SK-N-SH (cell line): ENCODE measurements at regions of chr4 and their contacts with region 1.

Region 1: DNA sequence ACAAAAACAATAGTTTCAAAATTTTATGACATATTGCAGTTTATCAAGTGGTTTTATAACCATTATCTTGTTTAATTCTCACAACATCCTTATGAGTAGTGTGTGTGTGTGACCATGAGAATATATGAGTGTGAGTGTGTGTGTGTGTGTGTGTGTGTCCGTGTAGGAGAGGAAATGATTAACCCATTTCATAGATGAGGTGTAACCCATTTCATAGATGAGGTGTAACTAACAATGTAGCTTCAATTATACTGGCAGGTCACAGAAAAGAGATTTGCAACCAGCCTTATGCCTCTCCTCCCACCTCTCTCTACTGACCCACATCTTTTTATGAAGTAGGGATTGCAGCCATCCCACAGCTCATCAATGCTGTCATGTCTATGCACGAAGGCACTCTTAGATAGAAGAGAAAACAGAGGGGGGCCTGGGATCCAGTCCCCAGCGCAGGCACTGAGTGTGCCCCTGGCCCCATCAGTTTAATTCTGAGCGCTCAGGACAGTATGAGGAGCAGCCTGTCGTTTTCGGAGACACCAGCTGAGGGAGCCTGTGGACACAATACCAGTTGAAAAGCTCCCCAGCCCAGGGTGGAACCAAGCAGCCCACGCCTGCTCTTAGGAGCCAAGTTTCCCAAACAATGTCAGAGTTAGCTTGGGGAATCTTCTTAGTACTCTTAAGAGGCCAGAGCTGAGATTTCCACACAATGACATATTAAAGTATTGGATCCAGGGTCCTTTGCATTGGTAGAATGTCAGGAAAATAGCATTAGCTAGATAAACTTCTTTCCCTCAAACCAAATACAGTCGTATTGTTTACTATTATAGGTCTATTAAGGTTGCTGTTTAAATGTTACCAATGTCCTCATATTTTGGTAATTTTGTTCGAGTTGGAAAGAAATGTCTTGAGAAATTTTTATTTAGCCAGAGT is 88.6 kb downstream of the PALLD start:
- DNase-seq: peak; percentile 60
- H3K4me3 ChIP-seq: no peak overlapping the region
- H3K27ac ChIP-seq: peak overlapping the region in 1 of 2 experiments; percentile 77; a peak in 3 of 4 replicates
- H3K4me1 ChIP-seq: peaks cover 5 to 47% of the 10 kb centered on the region in 2 experiments
- H3K27me3 ChIP-seq: no peaks in the 10 kb centered on the region
- CTCF ChIP-seq: peak; percentile 83
- EP300 ChIP-seq: no peak
- RAD21 ChIP-seq: peak; percentile 90

Region 2: DNA sequence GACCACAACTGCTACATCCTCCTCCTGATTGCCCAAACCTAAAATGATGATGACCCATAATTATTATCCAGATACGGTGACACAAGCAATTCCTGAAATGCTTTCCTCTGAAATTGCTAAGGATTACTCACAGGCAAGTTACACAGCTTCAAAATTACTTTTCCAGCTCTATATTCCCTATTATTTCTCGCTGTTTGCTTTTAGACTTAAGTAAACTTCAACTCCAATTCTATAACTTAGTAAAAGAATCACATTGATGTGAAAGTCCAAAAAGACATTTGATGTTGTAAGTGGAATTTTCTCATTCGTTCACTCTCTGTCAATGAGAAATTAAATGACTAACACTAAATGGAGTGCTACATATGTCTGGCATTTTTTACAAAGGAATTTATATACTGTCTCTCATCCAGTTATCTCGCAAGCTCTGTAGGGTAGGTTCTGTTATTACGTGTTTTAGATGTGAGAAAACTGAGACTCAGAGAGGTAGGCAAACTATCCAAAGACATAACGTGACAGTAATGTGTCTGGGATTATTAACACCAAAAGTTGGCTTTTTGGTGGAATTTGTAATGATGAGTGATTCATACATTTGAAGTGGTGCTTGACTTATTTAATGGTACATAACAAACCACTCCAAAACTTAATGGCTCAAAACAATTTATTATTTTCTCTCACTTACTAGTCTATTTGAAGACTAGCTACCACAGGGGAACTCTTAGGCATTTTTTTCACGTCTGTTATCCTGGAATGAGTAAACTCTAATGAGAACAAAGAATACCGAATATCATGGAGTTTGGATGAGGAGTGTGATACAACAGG is 57.1 kb before region 1 on chr4:
- CTCF ChIA-PET with region 1: no interaction called
- POLR2A ChIA-PET with region 1: no interaction called
- DNase-seq: no peak
- H3K4me3 ChIP-seq: no peak overlapping the region
- H3K27ac ChIP-seq: peak overlapping the region in 1 of 2 experiments; percentile 65; a peak in 2 of 4 replicates
- H3K4me1 ChIP-seq: peaks cover 0 to 20% of the 10 kb centered on the region in 2 experiments; a peak in 2 of 4 replicates
- H3K27me3 ChIP-seq: no peaks in the 10 kb centered on the region
- CTCF ChIP-seq: no peak
- EP300 ChIP-seq: no peak
- RAD21 ChIP-seq: no peak

Region 3: GRCh38 chr4:168560184-168560827 is 25.1 kb before region 1 on chr4:
- CTCF ChIA-PET with region 1: interaction called, 14 read pairs
- POLR2A ChIA-PET with region 1: no interaction called
- DNase-seq: no peak
- H3K4me3 ChIP-seq: no peak overlapping the region
- H3K27ac ChIP-seq: peak overlapping the region; percentile 66 to 86
- H3K4me1 ChIP-seq: peaks cover 8 to 61% of the 10 kb centered on the region in 2 experiments; a peak in 3 of 4 replicates
- H3K27me3 ChIP-seq: no peaks in the 10 kb centered on the region
- CTCF ChIP-seq: no peak
- EP300 ChIP-seq: peak in 1 of 2 experiments; percentile 40; a peak in 1 of 4 replicates
- RAD21 ChIP-seq: no peak

Region 4: GRCh38 chr4:168598191-168598590 is 12.8 kb after region 1 on chr4:
- CTCF ChIA-PET with region 1: interaction called, 11 read pairs
- POLR2A ChIA-PET with region 1: no interaction called
- DNase-seq: no peak
- H3K4me3 ChIP-seq: no peak overlapping the region
- H3K27ac ChIP-seq: no peak overlapping the region
- H3K4me1 ChIP-seq: peaks cover 0 to 4% of the 10 kb centered on the region in 2 experiments; a peak in 2 of 4 replicates
- H3K27me3 ChIP-seq: no peaks in the 10 kb centered on the region
- CTCF ChIP-seq: no peak
- EP300 ChIP-seq: no peak
- RAD21 ChIP-seq: no peak

Region 5: GRCh38 chr4:168631241-168632162 is 46.1 kb after region 1 on chr4:
- CTCF ChIA-PET with region 1: interaction called, 16 read pairs
- POLR2A ChIA-PET with region 1: no interaction called
- DNase-seq: peak; percentile 87
- H3K4me3 ChIP-seq: peak overlapping the region; percentile 77 to 79
- H3K27ac ChIP-seq: peak overlapping the region; percentile 75 to 93
- H3K4me1 ChIP-seq: peaks cover 19 to 37% of the 10 kb centered on the region in 2 experiments
- H3K27me3 ChIP-seq: no peaks in the 10 kb centered on the region
- CTCF ChIP-seq: peak; percentile 52
- EP300 ChIP-seq: no peak
- RAD21 ChIP-seq: peak; percentile 23

Region 6: GRCh38 chr4:168831919-168832762 is 246.7 kb after region 1 on chr4:
- CTCF ChIA-PET with region 1: interaction called, 13 read pairs
- POLR2A ChIA-PET with region 1: interaction called, 5 read pairs
- DNase-seq: peak; percentile 86
- H3K4me3 ChIP-seq: peak overlapping the region; percentile 82 to 93
- H3K27ac ChIP-seq: peak overlapping the region; percentile 80 to 90
- H3K4me1 ChIP-seq: peaks cover 10 to 13% of the 10 kb centered on the region in 2 experiments; a peak in 3 of 4 replicates
- H3K27me3 ChIP-seq: no peaks in the 10 kb centered on the region
- CTCF ChIP-seq: no peak
- EP300 ChIP-seq: no peak; a peak in 1 of 4 replicates
- RAD21 ChIP-seq: no peak